Endothelial cell of umbilical vein (primary cell): ENCODE measurements at regions of chr17 and their contacts with region 1.

Region 1: DNA sequence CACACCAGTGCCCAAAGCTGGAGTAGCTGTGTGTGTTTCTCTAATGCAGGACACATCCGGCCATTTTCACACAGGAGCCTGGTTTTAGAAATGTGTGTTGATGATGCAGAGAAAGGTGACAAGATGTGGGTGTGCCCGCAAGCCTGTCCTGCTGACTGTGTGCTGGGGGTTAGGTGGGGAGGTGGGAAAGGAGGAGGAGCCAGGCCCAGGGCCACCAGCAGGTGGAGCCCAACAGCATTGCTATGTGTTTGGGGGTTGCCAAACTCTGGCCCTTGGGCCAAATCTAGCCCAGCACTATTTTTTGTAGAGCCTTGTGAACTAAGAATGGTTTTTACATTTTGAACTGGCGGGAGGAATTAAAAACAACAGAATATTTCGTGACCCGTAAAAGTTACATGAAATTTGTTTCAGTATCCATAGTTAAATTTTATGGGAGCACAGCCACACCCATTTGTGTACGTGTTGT is 61.7 kb upstream of the LGALS9 start:
- DNase-seq: peak; percentile 33
- H3K4me3 ChIP-seq: no peak overlapping the region
- H3K27ac ChIP-seq: no peak overlapping the region
- H3K4me1 ChIP-seq: peaks cover 27% of the 10 kb centered on the region
- H3K27me3 ChIP-seq: no peaks in the 10 kb centered on the region
- CTCF ChIP-seq: peak; percentile 52 to 76
- POLR2A ChIP-seq: no peak

Region 2: GRCh38 chr17:27455914-27456680 is 113.2 kb before region 1 on chr17 and contains the start of gene KSR1:
- CTCF ChIA-PET with region 1: interaction called, 20 read pairs
- POLR2A ChIA-PET with region 1: no interaction called
- dilution Hi-C with region 1: no loop called
- intact Hi-C with region 1: no loop called
- DNase-seq: peak; percentile 78
- H3K4me3 ChIP-seq: peak within 1 kb of the TSS; percentile 24 to 85 (median 62)
- H3K27ac ChIP-seq: peak within 1 kb of the TSS; percentile 35
- H3K4me1 ChIP-seq: peaks cover 18% of the 10 kb centered on the region
- H3K27me3 ChIP-seq: no peaks in the 10 kb centered on the region
- CTCF ChIP-seq: peak; percentile 39 to 74
- POLR2A ChIP-seq: peak; percentile 71
- total RNA-seq, gene KSR1: 55.6 and 80.2 TPM in 2 replicates